HCT116 (cell line): ENCODE measurements at regions of chr2 and their contacts with region 1.

Region 1: DNA sequence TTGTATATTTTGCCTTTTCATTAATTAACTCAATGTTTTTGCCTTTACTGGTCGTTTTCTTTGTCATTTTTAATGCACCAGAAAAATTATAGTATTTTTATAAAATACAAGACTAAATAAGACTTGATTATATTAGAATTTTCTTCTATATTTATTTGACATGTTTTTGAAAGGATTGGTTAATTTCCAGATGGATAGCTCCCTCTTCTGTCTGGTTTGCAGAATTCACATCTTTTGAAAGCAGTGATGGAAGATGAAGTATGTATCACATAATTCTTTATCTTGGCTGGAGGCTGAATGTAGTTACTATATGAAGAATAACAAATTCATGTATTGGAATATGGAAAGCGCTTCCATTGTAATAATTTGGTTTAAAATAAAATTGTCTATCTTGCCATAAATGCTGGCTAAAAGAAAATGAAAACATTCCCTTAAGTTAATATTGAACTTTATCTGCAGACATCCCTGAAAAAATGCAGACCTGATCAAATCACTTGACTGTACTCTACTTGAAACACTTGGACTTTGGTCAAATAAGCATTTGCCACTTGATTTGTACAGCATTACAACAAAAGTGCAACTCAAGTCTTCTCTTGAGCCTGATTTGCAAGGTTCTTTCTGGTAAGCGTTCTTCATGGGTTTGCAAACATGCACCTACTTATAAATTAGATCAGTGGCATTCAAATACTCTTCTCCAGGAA is 86.3 kb upstream of the EFEMP1 start:
- DNase-seq: peak; percentile 26
- ATAC-seq: peak; percentile 47; the same call in 1 of the 2 replicates
- H3K4me3 ChIP-seq: no peak overlapping the region
- H3K27ac ChIP-seq: no peak overlapping the region
- H3K4me1 ChIP-seq: no peaks in the 10 kb centered on the region
- H3K27me3 ChIP-seq: no peaks in the 10 kb centered on the region
- CTCF ChIP-seq: peak; percentile 55 to 69 (median 58); a peak in 5 of 6 replicates
- POLR2A ChIP-seq: no peak
- RAD21 ChIP-seq: peak; percentile 79

Region 2: GRCh38 chr2:55718165-55719008 is 291.5 kb before region 1 on chr2:
- CTCF ChIA-PET with region 1: interaction called, 4 read pairs
- POLR2A ChIA-PET with region 1: no interaction called
- RAD21 ChIA-PET with region 1: no interaction called
- intact Hi-C with region 1: loop called (anchors 1 kb)
- DNase-seq: peak; percentile 59
- ATAC-seq: peak; percentile 76
- H3K4me3 ChIP-seq: no peak overlapping the region
- H3K27ac ChIP-seq: no peak overlapping the region
- H3K4me1 ChIP-seq: no peaks in the 10 kb centered on the region
- H3K27me3 ChIP-seq: no peaks in the 10 kb centered on the region
- CTCF ChIP-seq: peak; percentile 80 to 94 (median 82)
- POLR2A ChIP-seq: no peak
- RAD21 ChIP-seq: peak; percentile 88

Region 3: DNA sequence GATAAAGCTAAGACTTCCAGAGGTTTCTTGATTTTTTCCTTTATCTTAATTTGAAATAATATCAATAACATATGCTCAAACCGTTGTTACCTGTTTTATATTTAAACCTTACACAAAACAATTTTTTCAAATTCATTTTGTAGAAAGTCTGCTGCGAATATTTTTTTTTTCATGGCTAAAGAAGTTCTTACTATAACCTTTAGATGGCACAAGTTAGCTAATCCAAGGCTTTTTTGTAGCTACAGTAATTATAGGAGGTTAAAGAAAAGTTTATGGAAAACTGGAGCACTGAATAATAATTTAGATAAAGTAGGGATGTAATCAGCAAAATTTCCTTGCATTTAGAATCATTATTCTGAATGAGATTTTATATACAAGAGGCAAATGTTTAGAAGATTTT is 238.3 kb before region 1 on chr2:
- CTCF ChIA-PET with region 1: interaction called, 20 read pairs
- POLR2A ChIA-PET with region 1: no interaction called
- RAD21 ChIA-PET with region 1: no interaction called
- intact Hi-C with region 1: loop called (anchors 1 kb)
- DNase-seq: peak; percentile 16
- ATAC-seq: no peak
- H3K4me3 ChIP-seq: no peak overlapping the region
- H3K27ac ChIP-seq: no peak overlapping the region
- H3K4me1 ChIP-seq: no peaks in the 10 kb centered on the region
- H3K27me3 ChIP-seq: no peaks in the 10 kb centered on the region
- CTCF ChIP-seq: peak; percentile 48 to 74 (median 71); a peak in 5 of 6 replicates
- POLR2A ChIP-seq: no peak
- RAD21 ChIP-seq: peak; percentile 77

Region 4: GRCh38 chr2:56729212-56729611 is 719.3 kb after region 1 on chr2:
- CTCF ChIA-PET with region 1: no interaction called
- POLR2A ChIA-PET with region 1: no interaction called
- RAD21 ChIA-PET with region 1: no interaction called
- intact Hi-C with region 1: no loop called
- DNase-seq: no peak
- ATAC-seq: no peak
- H3K4me3 ChIP-seq: no peak overlapping the region
- H3K27ac ChIP-seq: no peak overlapping the region
- H3K4me1 ChIP-seq: no peaks in the 10 kb centered on the region
- H3K27me3 ChIP-seq: no peaks in the 10 kb centered on the region
- CTCF ChIP-seq: no peak
- POLR2A ChIP-seq: no peak
- RAD21 ChIP-seq: no peak